G401 (cell line): ENCODE measurements at regions of chr22 and their contacts with region 1.

Region 1: DNA sequence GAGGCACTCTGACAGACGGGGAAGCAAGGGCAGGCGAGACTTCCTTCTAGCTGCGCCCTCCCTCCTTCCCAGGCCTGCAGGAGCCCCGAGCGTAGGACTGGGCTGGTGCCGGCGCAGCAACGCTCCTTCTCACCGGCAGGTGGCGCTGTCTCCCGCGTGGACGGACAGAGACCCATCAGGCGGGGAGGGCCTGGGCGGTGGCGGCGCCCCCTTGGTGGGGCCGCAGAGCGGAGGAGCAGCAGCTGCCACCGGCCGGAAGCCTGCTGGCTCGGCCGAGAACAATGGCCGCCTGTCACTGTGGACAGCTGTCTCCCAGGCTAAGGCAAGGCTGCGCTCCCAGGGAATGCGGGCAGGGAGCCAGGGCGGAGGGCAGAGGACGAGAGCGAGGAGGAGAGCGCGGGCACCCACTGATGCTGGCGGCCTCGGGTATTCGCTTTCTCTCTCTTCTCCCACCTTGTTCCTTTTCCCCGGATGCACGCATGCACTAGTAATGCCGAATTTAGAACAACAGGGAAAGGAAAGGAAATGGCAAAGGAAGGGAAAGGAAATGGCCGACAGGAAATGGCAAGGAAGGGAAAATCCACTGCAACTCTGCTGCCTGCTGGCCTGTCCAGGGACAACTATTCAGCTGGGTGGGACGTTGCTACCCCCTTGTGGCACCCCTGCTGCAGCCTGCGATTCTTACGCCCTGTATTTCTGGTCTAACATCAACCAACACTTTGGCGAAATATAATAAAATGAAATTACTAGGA is 14.4 kb downstream of the PPM1F start:
- DNase-seq: peak; percentile 93

Region 2: DNA sequence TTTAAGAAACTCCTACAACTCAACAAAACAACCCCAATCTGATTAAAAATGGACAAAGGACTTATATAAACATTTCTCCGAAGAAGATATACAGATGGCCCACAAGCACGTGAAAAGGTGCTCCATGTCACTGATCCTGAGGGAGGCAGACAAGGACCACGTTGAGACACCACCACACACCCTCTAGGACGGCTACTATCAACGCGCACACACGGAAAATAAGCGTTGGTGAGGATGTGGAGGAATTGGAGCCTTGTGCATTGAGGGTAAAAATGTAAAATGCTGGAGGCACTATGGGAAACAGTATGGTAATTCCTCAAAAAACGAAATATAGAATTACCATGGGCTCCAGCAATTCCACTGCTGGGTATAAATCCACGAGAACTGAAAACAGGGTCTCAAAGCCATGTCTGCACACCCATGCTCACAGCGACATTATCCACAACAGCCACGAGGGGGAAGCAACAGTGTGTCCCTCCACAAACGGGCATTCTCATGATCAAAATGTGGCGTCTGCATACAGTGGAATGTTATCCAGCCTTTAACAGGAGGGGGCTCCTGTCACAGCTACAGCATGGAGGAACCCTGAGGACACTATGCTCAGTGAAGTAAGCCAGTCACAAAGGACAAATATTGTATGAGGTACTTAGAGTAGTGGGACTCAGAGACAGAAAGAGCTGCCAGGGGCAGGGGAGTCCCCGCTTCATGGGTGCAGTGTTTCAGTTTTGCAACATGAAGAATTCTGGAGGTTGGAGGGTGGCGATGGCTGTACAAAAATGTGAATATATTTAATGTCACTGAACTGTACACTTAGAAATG is 225.1 kb before region 1 on chr22:
- in situ Hi-C with region 1: loop called (anchors 10 kb)
- DNase-seq: peak; percentile 90

Region 3: GRCh38 chr22:21857481-21857914 is 80.7 kb before region 1 on chr22:
- in situ Hi-C with region 1: loop called (anchors 10 kb)
- DNase-seq: no peak